Aorta (tissue), 5 donors: ENCODE measurements at regions of chr11 and their contacts with region 1.

Region 1: DNA sequence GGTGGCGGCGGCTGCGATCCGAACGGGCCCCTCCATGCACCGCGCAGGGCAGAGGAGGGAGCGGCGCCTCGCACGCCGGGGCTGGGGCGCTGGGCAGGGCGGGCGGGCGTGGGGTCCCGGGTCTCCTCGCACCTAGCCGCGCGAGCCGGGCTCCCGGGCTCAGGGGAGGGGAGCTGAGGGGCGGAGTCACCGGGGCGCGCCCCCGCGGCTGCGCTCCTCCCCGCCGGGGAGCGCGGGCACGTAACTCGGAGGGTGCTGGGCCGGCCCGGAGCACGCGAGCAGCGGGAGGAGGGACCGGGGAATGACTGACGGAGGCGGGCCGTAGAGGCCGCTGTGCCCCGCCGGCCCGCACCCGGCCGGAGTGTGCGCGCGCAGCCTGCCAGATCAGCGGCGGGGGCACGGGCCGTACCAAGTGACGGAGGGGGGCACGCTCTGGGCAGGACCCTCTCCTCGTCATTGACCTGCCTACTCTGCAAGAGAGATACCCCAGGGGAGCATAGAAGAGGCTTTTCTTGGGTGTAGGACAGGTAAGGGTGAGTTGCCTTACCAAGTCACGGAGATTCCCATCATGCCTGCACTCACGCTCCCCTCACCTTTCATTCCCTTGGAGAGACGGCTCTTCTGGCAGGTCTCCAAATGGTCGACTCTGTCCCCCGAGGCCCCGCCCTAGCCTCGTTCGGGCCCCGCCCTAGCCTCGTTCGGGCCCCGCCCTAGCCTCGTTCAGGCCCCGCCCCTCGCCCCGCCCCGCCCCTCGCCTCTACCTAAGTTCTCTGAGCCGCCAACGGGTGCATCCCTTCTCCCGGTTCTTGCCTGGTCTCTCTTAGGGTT is at the start of gene CDON:
- DNase-seq: peak; percentile 93 to 96
- ATAC-seq: peak; percentile 98
- H3K4me3 ChIP-seq: peak within 1 kb of the TSS; percentile 66 to 87
- H3K27ac ChIP-seq: no peak within 1 kb of the TSS
- H3K4me1 ChIP-seq: peaks cover 2 to 3% of the 10 kb centered on the region in 2 donors
- H3K27me3 ChIP-seq: no peaks in the 10 kb centered on the region
- total RNA-seq, gene CDON: 8.1 to 50.3 TPM

Region 2: GRCh38 chr11:126115816-126116331 is 53.0 kb after region 1 on chr11:
- intact Hi-C with region 1: loop called (anchors 1 to 5 kb)
- DNase-seq: peak; percentile 74 to 89
- ATAC-seq: peak; percentile 89
- H3K4me3 ChIP-seq: no peak overlapping the region
- H3K27ac ChIP-seq: peak overlapping the region; percentile 31 to 87
- H3K4me1 ChIP-seq: peaks cover 2 to 17% of the 10 kb centered on the region in 2 donors
- H3K27me3 ChIP-seq: no peaks in the 10 kb centered on the region

Region 3: GRCh38 chr11:126194121-126194543 is 131.2 kb after region 1 on chr11:
- intact Hi-C with region 1: loop called in 1 of 2 experiments (anchors 10 kb)
- DNase-seq: no peak
- ATAC-seq: peak; percentile 61
- H3K4me3 ChIP-seq: no peak overlapping the region
- H3K27ac ChIP-seq: no peak overlapping the region
- H3K4me1 ChIP-seq: no peaks in the 10 kb centered on the region
- H3K27me3 ChIP-seq: no peaks in the 10 kb centered on the region

Region 4: DNA sequence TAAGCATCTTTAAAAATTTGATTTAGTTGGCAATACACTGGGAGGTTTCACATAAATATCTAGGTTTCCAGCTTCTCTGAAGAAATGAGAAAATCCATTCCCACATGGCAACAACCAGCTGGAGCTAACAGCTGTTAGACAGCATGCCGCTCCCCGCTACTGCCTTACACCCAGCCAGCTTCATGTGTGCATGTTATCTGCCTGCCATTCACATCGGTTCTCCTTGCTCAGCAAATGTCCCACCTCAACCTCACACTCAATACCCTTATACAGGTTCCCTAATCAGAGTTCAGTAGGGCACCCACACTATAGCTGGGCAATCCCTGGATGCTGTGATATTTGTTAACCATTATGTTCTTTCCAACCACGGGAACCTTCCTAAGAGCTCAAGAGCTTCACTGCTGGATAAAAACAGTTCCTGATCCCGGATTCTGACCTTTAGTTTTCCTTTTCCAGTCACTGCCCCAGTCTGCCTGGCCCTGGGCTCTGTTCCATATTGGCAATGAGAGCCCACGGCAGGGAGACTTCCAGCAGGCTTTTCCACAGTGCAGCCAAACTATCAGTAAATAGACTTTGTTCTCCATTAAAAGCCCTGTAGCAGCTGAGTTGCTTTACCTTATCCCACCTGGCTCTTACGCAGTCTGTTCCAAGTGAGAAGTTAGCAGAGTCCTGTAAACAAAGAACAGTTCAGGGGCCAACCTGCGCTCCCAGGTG is 139.9 kb after region 1 on chr11:
- intact Hi-C with region 1: loop called (anchors 10 kb)
- DNase-seq: no peak
- ATAC-seq: no peak
- H3K4me3 ChIP-seq: no peak overlapping the region
- H3K27ac ChIP-seq: no peak overlapping the region
- H3K4me1 ChIP-seq: no peaks in the 10 kb centered on the region
- H3K27me3 ChIP-seq: no peaks in the 10 kb centered on the region

Region 5: DNA sequence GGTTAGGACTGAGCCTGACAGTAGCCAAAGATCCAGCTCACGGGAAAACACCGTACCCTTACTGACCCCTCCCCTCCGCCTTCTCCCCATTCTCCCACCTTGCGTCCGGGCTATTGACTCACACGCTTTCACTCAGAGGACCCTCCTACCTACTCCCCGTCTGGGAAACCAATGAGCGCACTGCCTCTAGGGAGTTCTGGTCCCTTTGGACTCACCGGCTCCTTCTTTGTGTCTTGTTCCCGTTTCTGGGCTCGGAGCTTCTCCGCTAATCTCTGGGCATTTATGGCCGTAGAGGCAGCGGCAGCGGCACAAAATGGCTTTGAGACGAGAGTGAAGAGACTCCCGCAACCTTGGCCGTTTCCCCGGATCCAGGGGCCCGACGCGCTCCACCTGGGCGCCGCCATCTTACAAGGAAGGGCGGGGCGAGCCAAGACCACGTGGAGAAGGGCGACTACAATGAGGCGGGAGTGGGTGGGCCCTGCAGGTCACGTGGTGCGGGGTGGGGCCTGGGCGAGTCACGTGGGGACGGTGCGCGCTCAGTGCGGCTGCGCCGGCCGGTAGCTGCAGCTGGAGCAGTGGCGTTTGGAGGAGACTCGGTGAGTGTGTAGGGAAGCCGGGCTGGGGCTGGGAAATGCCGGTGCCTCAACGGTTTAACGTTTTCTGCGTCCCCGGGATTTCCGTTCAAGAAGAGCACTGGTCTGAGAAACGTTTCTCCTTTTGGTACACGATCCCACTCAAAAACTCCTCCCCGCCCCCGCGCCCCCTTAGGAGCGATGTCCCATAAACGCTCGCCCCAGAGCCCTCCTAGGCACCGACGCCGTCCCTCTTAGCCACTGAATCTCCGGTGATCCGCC is 148.6 kb after region 1 on chr11 and contains the starts of genes FAM118B and RPUSD4:
- intact Hi-C with region 1: loop called (anchors 2 to 10 kb)
- DNase-seq: peak; percentile 99 to 100
- ATAC-seq: peak; percentile 100
- H3K4me3 ChIP-seq: peak within 1 kb of the TSS; percentile 73 to 75
- H3K27ac ChIP-seq: no peak within 1 kb of the TSS
- H3K4me1 ChIP-seq: peaks cover 0 to 6% of the 10 kb centered on the region in 2 donors
- H3K27me3 ChIP-seq: no peaks in the 10 kb centered on the region
- total RNA-seq, gene FAM118B: 14.1 to 21.9 TPM
- total RNA-seq, gene RPUSD4: 18.1 to 24.0 TPM